ENCODE measurements at regions of chr17 and their contacts with region 1.

Region 1: DNA sequence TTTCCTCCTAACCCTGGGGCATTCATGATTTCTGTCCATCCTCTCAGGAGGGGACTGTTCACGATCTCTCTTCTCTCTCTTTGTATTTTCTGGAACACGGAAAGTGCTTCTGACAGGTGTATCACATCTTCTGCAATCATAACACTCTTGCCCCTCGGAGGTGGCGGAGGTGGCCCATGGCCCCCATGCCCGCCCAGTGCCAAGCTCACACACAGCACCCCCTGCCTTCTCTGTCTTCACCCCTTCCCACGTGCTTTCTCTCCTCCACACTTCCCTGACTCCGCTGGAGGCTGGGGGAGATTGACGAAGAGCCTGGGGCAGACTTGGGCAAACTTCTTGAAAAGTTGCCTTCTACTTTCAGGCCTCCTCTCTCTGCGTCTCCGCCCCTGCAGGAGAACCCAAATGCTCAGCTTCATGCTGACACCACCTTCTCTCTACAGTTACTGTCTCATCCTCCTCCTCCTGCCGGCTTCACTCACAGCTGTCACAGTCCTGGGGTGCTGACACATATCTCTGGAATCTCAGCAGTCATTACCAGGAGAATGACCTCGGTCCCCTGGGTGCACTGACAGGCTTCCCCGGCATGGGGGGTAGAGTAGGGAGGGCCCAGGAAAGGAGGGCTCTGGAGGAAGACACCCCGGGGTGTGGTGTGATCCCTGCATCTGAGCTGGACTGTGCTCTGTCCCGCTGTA is 127.1 kb downstream of the ENGASE start:
- DNase-seq: no peak
- H3K4me3 ChIP-seq: no peak overlapping the region
- H3K27ac ChIP-seq: no peak overlapping the region
- H3K4me1 ChIP-seq: peaks cover 0 to 14% (median 9%) of the 10 kb centered on the region in 4 experiments; a peak in 6 of 7 replicates
- H3K27me3 ChIP-seq: no peaks in the 10 kb centered on the region
- CTCF ChIP-seq: no peak
- EP300 ChIP-seq: no peak
- POLR2A ChIP-seq: no peak
- RAD21 ChIP-seq: no peak

Region 2: GRCh38 chr17:79214940-79215604 is 13.4 kb after region 1 on chr17:
- CTCF ChIA-PET with region 1: interaction called, 16 read pairs
- POLR2A ChIA-PET with region 1: interaction called, 3 read pairs
- DNase-seq: no peak
- H3K4me3 ChIP-seq: no peak overlapping the region
- H3K27ac ChIP-seq: no peak overlapping the region
- H3K4me1 ChIP-seq: peaks cover 0 to 46% (median 29%) of the 10 kb centered on the region in 4 experiments; a peak in 6 of 7 replicates
- H3K27me3 ChIP-seq: no peaks in the 10 kb centered on the region
- CTCF ChIP-seq: no peak
- EP300 ChIP-seq: no peak
- POLR2A ChIP-seq: no peak
- RAD21 ChIP-seq: no peak